Sciatic nerve (tissue), 2 donors: ENCODE measurements at regions of chrX and their contacts with region 1.

Region 1: GRCh38 chrX:9341291-9342201 is 123.3 kb upstream of the TBL1X start:
- DNase-seq: peak; percentile 86
- ATAC-seq: peak; percentile 62

Region 2: GRCh38 chrX:8323356-8323755 is 1018.2 kb before region 1 on chrX:
- intact Hi-C with region 1: no loop called
- DNase-seq: no peak
- ATAC-seq: no peak

Region 3: DNA sequence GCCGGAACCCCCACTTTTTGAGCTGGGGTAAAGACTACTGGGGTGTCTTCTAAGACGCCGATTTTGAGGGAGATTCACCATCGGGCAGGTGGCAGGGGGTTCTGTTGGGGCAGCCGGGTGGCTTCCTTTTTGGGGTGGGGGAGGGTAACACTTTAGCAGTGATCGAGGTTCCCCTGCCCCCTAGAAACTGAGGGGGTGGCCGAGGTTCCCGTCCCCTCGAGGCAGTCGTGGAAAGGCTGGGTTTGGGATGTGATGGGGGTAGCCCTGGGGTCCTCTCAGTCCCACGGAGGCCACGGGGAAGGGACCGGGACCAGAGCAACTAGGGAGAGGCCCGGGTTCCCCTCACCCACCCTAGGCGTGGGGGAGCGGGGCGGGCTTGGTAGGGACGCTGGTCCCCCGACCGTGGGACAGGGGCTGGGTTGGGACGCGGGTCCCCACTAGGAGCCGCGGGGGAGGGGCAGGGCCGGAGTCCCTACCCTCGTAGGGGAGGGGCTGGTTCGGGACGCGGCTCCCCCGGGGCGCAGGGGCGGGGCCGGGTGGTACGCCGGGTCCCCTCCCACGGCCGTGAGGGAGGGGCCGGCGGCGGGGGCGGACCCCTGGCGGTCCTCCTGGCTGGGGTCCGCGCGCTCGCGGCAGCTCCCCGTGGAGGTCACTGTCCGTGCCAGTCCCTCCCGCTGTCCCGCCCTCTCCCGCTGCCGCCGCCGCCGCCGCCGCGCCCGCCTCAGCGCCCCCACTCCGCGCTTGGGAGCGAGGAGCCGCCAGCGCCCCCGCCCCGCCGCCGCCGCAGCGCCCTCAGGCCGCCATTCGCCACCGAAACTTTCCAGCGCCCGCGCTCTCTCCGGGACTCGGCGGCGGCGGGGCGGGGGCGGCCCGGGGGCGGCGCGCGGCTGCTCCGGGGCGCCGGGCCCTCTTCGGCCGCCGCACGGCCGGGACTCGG is 123.2 kb after region 1 on chrX and contains the start of gene TBL1X:
- intact Hi-C with region 1: loop called (anchors 5 kb)
- DNase-seq: peak; percentile 75
- ATAC-seq: peak; percentile 48
- total RNA-seq, gene TBL1X: 27.2 TPM